Calu3 (cell line): ENCODE measurements at regions of chr17 and their contacts with region 1.

Region 1: GRCh38 chr17:65556014-65556909 is 5.2 kb downstream of the AXIN2 start:
- DNase-seq: peak; percentile 85
- H3K4me3 Mint-ChIP-seq: no peak overlapping the region
- H3K27ac Mint-ChIP-seq: no peak overlapping the region
- H3K4me1 Mint-ChIP-seq: no peaks in the 10 kb centered on the region
- H3K27me3 Mint-ChIP-seq: peaks cover 27% of the 10 kb centered on the region
- CTCF ChIP-seq: peak; percentile 72

Region 2: DNA sequence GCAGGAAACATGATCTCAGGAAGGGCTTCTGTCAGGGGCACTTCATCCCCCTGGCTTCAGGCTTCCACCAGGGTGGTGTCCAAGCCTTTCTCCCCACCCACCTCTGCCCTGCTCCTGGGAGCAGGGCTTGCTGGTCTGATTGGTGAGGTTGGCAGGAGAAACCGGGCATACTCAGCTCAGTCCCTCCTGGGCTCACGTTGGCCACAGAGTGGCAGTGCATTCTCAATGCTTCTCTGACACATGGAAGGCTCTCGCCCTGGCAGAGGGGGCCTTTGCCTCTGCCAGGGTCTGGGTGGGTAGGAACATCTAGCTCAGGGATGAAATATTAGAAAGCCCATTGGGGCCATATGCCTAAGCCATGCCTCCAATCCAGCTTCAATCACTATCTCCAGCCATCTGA is 137.6 kb before region 1 on chr17:
- CTCF ChIA-PET with region 1: no interaction called
- intact Hi-C with region 1: loop called (anchors 5 kb)
- DNase-seq: no peak
- H3K4me3 Mint-ChIP-seq: no peak overlapping the region
- H3K27ac Mint-ChIP-seq: no peak overlapping the region
- H3K4me1 Mint-ChIP-seq: no peaks in the 10 kb centered on the region
- H3K27me3 Mint-ChIP-seq: peaks cover 7% of the 10 kb centered on the region
- CTCF ChIP-seq: no peak